ENCODE measurements at regions of chrX and their contacts with region 1.

Region 1: DNA sequence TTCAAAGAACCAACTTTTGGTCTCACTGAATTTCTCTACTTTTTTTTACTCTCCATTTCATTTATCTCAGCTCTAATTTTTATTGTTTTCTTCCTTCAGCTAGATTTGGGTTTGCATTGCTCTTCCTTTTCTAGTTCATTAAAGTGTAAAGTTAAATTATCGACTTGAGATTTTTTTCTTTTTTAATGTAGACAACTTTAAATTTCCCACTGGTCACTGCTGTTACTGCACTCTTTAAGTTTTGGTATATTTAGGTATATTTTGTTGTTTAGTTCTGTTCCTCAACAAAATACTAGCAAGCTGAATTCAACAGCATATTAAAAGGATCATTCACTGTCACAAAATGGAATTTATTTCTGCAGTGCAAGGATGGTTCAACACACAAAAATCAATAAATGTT is 572.0 kb upstream of the DIAPH2 start:
- DNase-seq: no peak
- ATAC-seq: no peak
- H3K4me3 ChIP-seq: no peak overlapping the region
- H3K4me3 Mint-ChIP-seq: no peak overlapping the region
- H3K27ac ChIP-seq: no peak overlapping the region
- H3K27ac Mint-ChIP-seq: no peak overlapping the region
- H3K4me1 ChIP-seq: no peaks in the 10 kb centered on the region
- H3K4me1 Mint-ChIP-seq: no peaks in the 10 kb centered on the region
- H3K27me3 ChIP-seq: no peaks in the 10 kb centered on the region
- H3K27me3 Mint-ChIP-seq: no peaks in the 10 kb centered on the region
- CTCF ChIP-seq: no peak

Region 2: DNA sequence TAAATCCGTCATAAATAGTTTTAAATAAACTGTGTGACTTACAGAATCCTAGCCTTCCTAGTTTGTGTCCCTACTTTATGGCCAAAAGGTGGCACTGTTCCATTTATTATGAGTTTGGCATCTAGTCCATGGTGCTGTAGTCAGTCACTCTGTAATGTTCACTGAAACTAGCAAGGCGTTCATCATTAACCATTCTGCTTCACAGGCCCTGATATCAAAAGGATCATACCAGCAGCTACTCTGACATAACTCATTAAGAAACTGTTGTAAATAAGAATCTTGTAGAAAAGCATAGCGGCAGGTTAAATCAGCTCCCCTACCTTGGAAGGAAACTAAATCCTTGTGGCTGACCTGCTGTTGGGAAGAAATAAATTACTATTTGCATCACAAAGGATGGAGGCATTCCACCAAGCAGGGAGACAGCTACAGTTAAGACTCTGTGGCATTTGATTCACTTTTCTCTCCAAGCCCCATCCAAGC is 347.7 kb before region 1 on chrX:
- CTCF ChIA-PET with region 1: no interaction called
- POLR2A ChIA-PET with region 1: no interaction called
- intact Hi-C with region 1: no loop called
- DNase-seq: no peak
- ATAC-seq: no peak
- H3K4me3 ChIP-seq: no peak overlapping the region
- H3K4me3 Mint-ChIP-seq: no peak overlapping the region
- H3K27ac ChIP-seq: no peak overlapping the region
- H3K27ac Mint-ChIP-seq: no peak overlapping the region
- H3K4me1 ChIP-seq: no peaks in the 10 kb centered on the region
- H3K4me1 Mint-ChIP-seq: no peaks in the 10 kb centered on the region
- H3K27me3 ChIP-seq: no peaks in the 10 kb centered on the region
- H3K27me3 Mint-ChIP-seq: no peaks in the 10 kb centered on the region
- CTCF ChIP-seq: no peak

Region 3: DNA sequence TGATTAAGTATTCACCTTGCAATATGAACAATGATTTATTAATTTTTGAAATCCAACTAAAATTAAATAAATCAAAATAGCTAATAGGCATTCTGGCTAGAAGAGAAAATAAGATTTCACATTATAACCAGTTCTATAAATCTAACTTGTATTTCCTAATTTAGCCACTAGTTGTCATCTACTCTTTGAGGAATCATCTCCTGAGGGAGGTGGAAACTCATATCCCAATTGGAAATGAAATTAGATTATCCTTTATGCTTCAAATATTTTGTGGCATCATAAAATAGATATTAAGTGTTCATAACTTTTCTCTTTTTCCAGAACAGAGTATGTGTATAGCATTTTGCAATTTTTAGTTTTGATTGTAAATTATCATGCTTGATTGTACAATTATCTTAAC is 13.5 kb after region 1 on chrX:
- CTCF ChIA-PET with region 1: no interaction called
- POLR2A ChIA-PET with region 1: no interaction called
- intact Hi-C with region 1: loop called in 1 of 2 experiments (anchors 2 kb)
- DNase-seq: no peak
- ATAC-seq: no peak
- H3K4me3 ChIP-seq: no peak overlapping the region
- H3K4me3 Mint-ChIP-seq: no peak overlapping the region
- H3K27ac ChIP-seq: no peak overlapping the region
- H3K27ac Mint-ChIP-seq: no peak overlapping the region
- H3K4me1 ChIP-seq: no peaks in the 10 kb centered on the region
- H3K4me1 Mint-ChIP-seq: no peaks in the 10 kb centered on the region
- H3K27me3 ChIP-seq: no peaks in the 10 kb centered on the region
- H3K27me3 Mint-ChIP-seq: no peaks in the 10 kb centered on the region
- CTCF ChIP-seq: no peak

Region 4: DNA sequence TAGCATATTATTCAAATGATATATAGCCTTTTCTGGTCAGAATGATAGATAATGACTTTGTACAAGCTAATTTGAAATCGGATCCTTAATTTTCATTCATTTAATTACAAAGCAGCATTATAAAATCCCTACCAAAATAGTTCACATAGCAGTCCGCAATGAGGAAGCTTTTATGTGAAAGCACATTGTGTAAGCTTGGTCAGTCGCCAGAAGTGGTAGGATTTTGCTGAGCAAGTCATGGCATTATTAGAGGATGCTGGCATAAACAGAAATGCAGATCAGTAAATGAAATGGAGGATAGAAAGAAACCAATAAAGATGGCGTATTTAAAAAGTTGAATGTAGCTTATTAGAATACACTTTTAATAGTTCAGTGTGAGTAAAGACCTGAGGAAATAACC is 478.7 kb after region 1 on chrX:
- CTCF ChIA-PET with region 1: no interaction called
- POLR2A ChIA-PET with region 1: no interaction called
- intact Hi-C with region 1: no loop called
- DNase-seq: no peak
- ATAC-seq: no peak
- H3K4me3 ChIP-seq: no peak overlapping the region
- H3K4me3 Mint-ChIP-seq: no peak overlapping the region
- H3K27ac ChIP-seq: no peak overlapping the region
- H3K27ac Mint-ChIP-seq: no peak overlapping the region
- H3K4me1 ChIP-seq: no peaks in the 10 kb centered on the region
- H3K4me1 Mint-ChIP-seq: no peaks in the 10 kb centered on the region
- H3K27me3 ChIP-seq: no peaks in the 10 kb centered on the region
- H3K27me3 Mint-ChIP-seq: no peaks in the 10 kb centered on the region
- CTCF ChIP-seq: no peak

Measured in CD8-positive, alpha-beta T cell (primary cell).